PC-3 (cell line): ENCODE measurements at regions of chr6 and their contacts with region 1.

Region 1: DNA sequence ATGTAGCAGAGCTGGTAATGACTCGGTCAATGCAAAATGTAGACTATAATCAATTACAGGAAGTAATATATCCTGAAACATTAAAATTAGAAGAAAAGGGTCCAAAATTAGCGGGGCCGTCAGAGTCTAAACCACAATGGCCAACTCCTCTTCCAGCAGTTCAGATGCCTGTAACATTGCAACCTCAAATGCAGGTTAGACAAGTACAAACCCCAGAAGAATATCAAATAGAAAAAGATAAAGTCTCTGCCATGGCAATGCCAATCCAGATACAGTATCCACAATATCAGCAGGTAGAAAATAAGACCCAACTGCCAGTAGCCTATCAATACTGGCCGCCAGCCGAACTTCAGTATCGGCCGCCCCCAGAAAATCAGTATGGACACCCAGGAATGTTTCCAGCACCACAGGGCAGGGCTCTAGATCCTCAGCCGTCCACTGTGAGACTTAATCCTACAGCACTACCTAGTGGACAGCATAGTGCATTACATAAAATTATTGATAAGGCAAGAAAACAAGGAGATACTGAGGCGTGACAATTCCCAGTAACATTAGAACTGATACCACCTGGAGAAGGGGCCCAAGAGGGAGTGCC is 158.4 kb downstream of the GPX5 start:
- DNase-seq: peak; percentile 70
- ATAC-seq: peak; percentile 73
- H3K4me3 ChIP-seq: peak overlapping the region; percentile 72
- H3K27ac ChIP-seq: no peak overlapping the region
- H3K4me1 ChIP-seq: peaks cover 13% of the 10 kb centered on the region; the same call in 1 of the 2 replicates
- H3K27me3 ChIP-seq: 0 out of 2 replicates have a peak, but pooled peaks cover 3% of the 10 kb centered on the region
- CTCF ChIP-seq: peak; percentile 75

Region 2: GRCh38 chr6:28393911-28394662 is 290.0 kb before region 1 on chr6:
- CTCF ChIA-PET with region 1: no interaction called
- POLR2A ChIA-PET with region 1: no interaction called
- intact Hi-C with region 1: loop called (anchors 1 kb)
- DNase-seq: peak; percentile 64
- ATAC-seq: peak; percentile 61
- H3K4me3 ChIP-seq: no peak overlapping the region
- H3K27ac ChIP-seq: no peak overlapping the region
- H3K4me1 ChIP-seq: peaks cover 7% of the 10 kb centered on the region; the same call in 1 of the 2 replicates
- H3K27me3 ChIP-seq: no peaks in the 10 kb centered on the region
- CTCF ChIP-seq: peak; percentile 73

Region 3: GRCh38 chr6:28531479-28532128 is 152.4 kb before region 1 on chr6:
- CTCF ChIA-PET with region 1: no interaction called
- POLR2A ChIA-PET with region 1: no interaction called
- intact Hi-C with region 1: no loop called
- DNase-seq: peak; percentile 14
- ATAC-seq: no peak
- H3K4me3 ChIP-seq: no peak overlapping the region
- H3K27ac ChIP-seq: no peak overlapping the region
- H3K4me1 ChIP-seq: no peaks in the 10 kb centered on the region
- H3K27me3 ChIP-seq: peaks cover 49% of the 10 kb centered on the region
- CTCF ChIP-seq: peak; percentile 32; the same call in 1 of the 2 replicates

Region 4: DNA sequence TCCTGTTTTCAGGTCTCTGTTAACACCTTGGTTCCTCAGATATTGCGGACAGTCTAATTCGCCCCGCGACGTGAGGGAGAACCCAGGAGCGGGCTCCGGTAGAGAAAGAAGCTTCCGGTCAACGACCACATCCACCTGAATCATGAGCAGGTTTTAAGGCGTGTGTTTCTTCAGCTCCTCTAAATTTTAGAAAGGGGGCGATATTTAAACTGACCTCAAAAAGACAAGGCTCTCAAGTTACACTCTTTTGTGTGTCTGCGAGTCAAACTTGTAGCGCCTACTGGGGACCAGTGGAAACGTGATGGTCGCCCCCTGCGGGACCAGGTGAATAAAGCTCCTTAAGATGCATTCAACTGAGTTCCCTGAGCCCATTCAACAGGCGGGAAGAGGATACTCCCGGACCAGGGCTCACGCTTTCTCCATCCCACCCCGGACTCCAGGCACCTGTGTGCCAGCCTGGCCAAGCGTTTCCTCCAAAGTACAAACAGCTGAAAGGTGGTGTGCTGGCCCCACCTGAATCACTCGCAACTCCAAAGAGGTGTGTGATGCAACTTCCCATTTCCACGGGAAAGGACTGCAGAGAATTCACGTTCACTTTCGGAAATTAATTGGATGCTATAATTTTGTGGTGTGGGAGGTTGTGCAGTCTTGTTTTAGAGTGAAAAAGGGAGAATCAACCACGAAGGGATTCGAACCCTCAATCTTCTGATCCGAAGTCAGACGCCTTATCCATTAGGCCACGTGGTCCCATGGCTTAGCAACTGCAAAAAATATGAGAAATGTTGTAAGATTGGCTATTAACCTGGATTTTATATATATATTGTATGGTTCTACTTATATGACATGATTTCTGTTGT is 141.4 kb before region 1 on chr6:
- CTCF ChIA-PET with region 1: no interaction called
- POLR2A ChIA-PET with region 1: no interaction called
- intact Hi-C with region 1: loop called (anchors 1 kb)
- DNase-seq: peak; percentile 95
- ATAC-seq: peak; percentile 91
- H3K4me3 ChIP-seq: peak overlapping the region; percentile 70
- H3K27ac ChIP-seq: no peak overlapping the region
- H3K4me1 ChIP-seq: peaks cover 7% of the 10 kb centered on the region; the same call in 1 of the 2 replicates
- H3K27me3 ChIP-seq: peaks cover 24% of the 10 kb centered on the region
- CTCF ChIP-seq: peak; percentile 85

Region 5: DNA sequence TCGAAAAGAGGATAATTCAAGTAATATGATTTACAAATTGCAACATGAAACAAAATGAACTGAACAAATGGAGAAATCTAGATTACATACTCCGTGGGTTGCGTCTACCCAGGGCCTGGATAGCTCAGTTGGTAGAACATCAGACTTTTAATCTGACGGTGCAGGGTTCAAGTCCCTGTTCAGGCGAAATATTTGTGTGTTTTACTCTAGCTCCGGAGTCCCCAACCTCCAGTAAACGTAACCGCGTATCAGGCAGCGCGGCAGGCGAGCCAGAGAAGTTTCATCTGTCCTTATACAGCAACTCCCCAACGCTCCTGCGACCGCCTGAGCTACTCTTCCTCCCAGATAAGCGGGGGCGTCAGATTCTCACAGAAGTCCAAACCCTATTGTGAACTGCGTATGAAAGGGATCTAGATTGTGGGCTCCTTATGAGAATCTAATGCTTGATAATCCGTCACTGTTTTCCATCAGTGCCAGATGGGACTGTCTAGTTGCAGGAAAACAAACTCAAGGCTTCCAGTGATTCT is 63.7 kb after region 1 on chr6:
- CTCF ChIA-PET with region 1: no interaction called
- POLR2A ChIA-PET with region 1: no interaction called
- intact Hi-C with region 1: loop called (anchors 2 kb)
- DNase-seq: peak; percentile 83
- ATAC-seq: peak; percentile 82
- H3K4me3 ChIP-seq: peak overlapping the region; percentile 38; the same call in 1 of the 2 replicates
- H3K27ac ChIP-seq: no peak overlapping the region
- H3K4me1 ChIP-seq: peaks cover 5% of the 10 kb centered on the region; the same call in 1 of the 2 replicates
- H3K27me3 ChIP-seq: no peaks in the 10 kb centered on the region
- CTCF ChIP-seq: no peak

Region 6: DNA sequence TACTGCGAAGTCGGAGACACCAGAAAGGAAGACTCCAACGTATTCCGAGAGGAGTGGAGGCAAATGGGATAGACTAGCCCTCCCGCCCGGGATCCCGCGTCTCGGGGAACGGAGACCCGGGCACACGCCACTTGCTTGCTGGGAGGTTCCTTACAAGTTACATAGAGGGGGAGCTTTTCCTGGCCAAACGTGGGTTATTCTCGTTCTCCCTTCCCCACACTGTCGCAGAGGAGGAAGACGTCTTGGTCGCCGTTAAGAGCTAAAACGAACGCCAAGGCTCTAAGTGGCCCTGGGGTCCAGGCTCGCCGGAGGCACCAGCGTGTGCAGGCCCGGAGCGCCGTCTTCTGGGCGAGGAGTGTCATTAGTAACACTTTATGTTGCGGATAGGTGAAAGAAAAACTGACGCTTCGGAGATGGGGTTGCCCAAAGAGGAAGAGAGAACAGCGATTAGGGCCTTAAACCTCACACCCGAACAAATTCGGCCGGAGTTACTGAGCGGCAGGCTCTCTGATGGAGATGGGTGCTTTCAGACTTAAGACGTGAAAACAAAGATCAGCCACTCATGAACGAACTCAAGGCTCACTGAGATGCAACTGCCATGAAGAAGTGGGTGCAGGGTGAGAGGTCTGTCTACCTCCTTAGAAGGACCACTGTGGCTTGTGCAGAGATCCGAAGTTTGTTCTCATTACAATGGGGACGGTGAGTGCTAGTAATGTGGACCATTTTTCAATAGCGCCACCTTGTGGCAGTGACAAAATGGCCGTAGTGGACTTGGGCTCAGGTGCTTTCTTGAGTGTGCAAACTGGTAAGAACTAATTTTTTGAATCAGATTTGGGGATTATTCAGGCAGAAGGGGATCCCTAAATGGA is 332.8 kb after region 1 on chr6:
- CTCF ChIA-PET with region 1: no interaction called
- POLR2A ChIA-PET with region 1: no interaction called
- intact Hi-C with region 1: loop called (anchors 1 kb)
- DNase-seq: peak; percentile 91
- ATAC-seq: peak; percentile 90
- H3K4me3 ChIP-seq: peak overlapping the region; percentile 94
- H3K27ac ChIP-seq: no peak overlapping the region
- H3K4me1 ChIP-seq: no peaks in the 10 kb centered on the region
- H3K27me3 ChIP-seq: no peaks in the 10 kb centered on the region
- CTCF ChIP-seq: peak; percentile 96